ENCODE measurements at regions of chr16 and their contacts with region 1.

Region 1: GRCh38 chr16:48687421-48688038 is 77.5 kb upstream of the N4BP1 start:
- DNase-seq: peak; percentile 63
- ATAC-seq: peak; percentile 80
- H3K4me3 Mint-ChIP-seq: no peak overlapping the region
- H3K27ac Mint-ChIP-seq: no peak overlapping the region
- H3K4me1 Mint-ChIP-seq: peaks cover 2% of the 10 kb centered on the region
- H3K27me3 Mint-ChIP-seq: peaks cover 20% of the 10 kb centered on the region

Region 2: DNA sequence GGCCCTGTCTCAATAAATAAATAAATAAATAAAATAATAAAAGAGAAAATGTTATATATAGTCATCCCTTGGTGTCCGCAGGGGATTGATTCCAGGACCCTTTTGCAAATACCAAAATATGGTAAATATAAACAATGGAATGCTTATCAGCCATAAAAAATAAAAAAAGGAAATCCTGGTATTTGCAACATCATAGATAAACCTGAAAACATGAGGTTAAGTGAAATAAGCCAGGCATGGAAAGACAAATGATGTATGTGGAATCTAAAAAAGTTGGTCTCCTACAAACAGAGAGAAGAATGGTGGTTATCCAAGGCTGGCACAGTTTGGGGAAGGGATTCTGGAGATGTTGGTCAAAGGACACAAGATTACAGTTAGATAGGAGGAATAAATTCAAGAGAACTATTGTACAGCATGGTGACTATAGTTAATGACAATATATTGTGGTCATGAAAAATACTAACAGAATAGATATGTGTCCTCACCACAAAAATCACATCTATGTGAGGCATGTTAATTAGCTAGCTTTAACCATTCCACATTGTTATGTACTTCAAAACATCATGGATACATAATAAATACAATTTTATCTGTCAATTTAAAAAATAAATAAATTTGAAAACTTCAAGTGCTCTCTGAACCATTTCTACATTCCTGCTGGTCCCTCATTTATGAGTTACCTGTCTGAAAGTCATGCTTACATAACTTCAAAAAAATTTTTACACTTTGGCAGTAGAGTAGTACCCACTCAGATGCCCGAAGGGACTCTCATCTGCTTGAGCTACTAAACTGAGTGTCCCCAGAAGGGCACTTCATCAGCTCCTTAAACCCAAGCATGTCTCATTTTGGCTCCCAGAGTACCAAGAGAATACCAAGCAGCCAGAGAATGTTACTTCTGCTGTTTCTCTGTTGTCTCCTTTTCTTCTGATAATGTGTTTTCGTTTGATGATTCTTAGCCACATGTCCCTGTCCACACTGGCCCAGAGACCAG is 104.2 kb before region 1 on chr16:
- CTCF ChIA-PET with region 1: no interaction called
- POLR2A ChIA-PET with region 1: no interaction called
- intact Hi-C with region 1: no loop called
- DNase-seq: no peak
- ATAC-seq: no peak
- H3K4me3 Mint-ChIP-seq: no peak overlapping the region
- H3K27ac Mint-ChIP-seq: no peak overlapping the region
- H3K4me1 Mint-ChIP-seq: peaks cover 30% of the 10 kb centered on the region
- H3K27me3 Mint-ChIP-seq: no peaks in the 10 kb centered on the region

Region 3: GRCh38 chr16:49183911-49184310 is 496.4 kb after region 1 on chr16:
- CTCF ChIA-PET with region 1: no interaction called
- POLR2A ChIA-PET with region 1: no interaction called
- intact Hi-C with region 1: loop called in 1 of 2 experiments (anchors 10 kb)
- DNase-seq: peak; percentile 17
- ATAC-seq: no peak
- H3K4me3 Mint-ChIP-seq: no peak overlapping the region
- H3K27ac Mint-ChIP-seq: no peak overlapping the region
- H3K4me1 Mint-ChIP-seq: no peaks in the 10 kb centered on the region
- H3K27me3 Mint-ChIP-seq: peaks cover 2% of the 10 kb centered on the region

Region 4: DNA sequence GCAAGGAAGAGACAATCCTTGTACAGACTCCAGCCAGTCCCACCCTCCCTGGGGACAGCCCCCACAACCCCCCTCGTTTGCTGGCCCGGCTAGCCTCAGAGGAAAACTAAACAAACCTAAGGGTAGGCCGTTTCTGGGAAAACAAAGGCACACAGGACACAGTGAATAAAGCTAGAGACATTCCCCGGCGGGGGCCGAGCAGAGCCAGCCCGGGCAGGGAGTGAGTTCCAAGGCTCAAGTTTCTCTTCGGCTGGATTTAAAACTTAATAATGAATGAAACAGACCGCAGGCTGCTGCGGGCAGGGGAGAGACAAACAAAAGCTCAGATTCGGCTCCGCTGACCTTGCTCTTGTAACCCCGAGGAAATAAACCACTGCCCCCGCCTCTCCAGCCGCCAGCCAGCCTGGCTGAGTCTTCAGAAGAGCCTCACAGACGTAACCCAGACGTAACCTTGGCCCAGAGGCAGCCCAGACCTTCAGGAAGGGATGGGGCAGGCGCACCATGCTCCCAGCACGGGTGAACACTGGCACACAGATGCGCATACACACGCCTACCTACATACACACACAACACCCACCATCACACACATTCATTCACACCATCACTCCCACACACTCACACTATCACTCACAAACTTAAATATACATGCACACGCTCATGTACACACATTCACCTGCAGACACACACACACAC is 952.4 kb after region 1 on chr16:
- CTCF ChIA-PET with region 1: no interaction called
- POLR2A ChIA-PET with region 1: no interaction called
- intact Hi-C with region 1: no loop called
- DNase-seq: no peak
- ATAC-seq: no peak
- H3K4me3 Mint-ChIP-seq: no peak overlapping the region
- H3K27ac Mint-ChIP-seq: no peak overlapping the region
- H3K4me1 Mint-ChIP-seq: no peaks in the 10 kb centered on the region
- H3K27me3 Mint-ChIP-seq: peaks cover 2% of the 10 kb centered on the region